B cell (primary cell): ENCODE measurements at regions of chr17 and their contacts with region 1.

Region 1: GRCh38 chr17:21043286-21044232 is 748 bp upstream of the USP22 start:
- DNase-seq: peak; percentile 98
- ATAC-seq: peak; percentile 75
- H3K4me3 ChIP-seq: peak overlapping the region; percentile 63 to 68 (median 65)
- H3K4me3 Mint-ChIP-seq: peak overlapping the region; percentile 81
- H3K27ac ChIP-seq: peak overlapping the region; percentile 95
- H3K27ac Mint-ChIP-seq: peak overlapping the region; percentile 90
- H3K4me1 ChIP-seq: peaks cover 24 to 37% of the 10 kb centered on the region in 2 donors
- H3K4me1 Mint-ChIP-seq: peaks cover 32% of the 10 kb centered on the region
- H3K27me3 ChIP-seq: no peaks in the 10 kb centered on the region
- H3K27me3 Mint-ChIP-seq: no peaks in the 10 kb centered on the region
- CTCF ChIP-seq: peak; percentile 92

Region 2: DNA sequence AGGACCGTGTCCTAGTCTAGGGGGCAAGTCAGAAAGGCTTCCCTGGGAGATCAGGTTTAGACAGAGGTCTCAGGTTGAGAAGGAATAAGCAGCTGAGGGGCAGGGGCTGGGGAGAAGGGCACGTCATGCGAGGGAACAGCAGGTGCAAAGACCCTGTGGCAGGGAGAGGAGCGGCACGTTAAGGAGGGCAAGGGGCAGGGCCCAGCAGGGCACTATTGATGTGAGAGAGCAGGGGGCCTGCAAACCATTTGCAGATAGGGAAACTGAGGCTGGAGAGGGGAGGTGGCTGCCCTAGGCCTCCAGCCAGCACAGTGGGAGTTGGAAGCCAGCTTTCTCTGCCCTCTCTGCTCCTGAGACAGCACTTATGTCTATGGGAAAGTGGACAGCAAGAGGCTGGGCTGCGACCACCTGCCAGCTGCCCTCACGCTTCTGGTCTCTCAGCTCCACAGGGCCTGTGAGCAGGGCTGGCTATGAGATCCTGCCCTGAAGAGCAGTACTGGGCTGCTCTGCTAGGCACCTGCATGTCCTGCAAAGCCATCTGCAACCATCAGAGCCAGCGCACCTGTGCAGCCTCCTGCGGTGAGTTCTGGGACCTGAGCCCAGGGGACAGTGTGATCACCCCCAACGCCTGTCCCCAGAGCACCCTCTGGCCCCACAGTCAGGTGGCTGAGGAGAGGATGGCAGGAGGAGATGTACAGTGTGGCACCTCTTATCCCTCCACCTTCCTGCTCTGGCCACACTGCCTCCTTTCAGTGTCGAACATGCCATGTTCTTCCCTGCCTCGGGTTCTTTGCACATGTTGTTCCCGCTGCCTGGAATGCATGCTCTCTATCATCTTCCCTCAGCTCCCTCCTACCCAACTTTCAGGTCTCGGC is 62.3 kb before region 1 on chr17:
- CTCF ChIA-PET with region 1: no interaction called
- POLR2A ChIA-PET with region 1: no interaction called
- intact Hi-C with region 1: no loop called
- DNase-seq: no peak
- ATAC-seq: no peak
- H3K4me3 ChIP-seq: no peak overlapping the region
- H3K4me3 Mint-ChIP-seq: no peak overlapping the region
- H3K27ac ChIP-seq: no peak overlapping the region
- H3K27ac Mint-ChIP-seq: no peak overlapping the region
- H3K4me1 ChIP-seq: peaks cover 0 to 4% of the 10 kb centered on the region in 2 donors
- H3K4me1 Mint-ChIP-seq: peaks cover 12% of the 10 kb centered on the region
- H3K27me3 ChIP-seq: no peaks in the 10 kb centered on the region
- H3K27me3 Mint-ChIP-seq: no peaks in the 10 kb centered on the region
- CTCF ChIP-seq: no peak

Region 3: DNA sequence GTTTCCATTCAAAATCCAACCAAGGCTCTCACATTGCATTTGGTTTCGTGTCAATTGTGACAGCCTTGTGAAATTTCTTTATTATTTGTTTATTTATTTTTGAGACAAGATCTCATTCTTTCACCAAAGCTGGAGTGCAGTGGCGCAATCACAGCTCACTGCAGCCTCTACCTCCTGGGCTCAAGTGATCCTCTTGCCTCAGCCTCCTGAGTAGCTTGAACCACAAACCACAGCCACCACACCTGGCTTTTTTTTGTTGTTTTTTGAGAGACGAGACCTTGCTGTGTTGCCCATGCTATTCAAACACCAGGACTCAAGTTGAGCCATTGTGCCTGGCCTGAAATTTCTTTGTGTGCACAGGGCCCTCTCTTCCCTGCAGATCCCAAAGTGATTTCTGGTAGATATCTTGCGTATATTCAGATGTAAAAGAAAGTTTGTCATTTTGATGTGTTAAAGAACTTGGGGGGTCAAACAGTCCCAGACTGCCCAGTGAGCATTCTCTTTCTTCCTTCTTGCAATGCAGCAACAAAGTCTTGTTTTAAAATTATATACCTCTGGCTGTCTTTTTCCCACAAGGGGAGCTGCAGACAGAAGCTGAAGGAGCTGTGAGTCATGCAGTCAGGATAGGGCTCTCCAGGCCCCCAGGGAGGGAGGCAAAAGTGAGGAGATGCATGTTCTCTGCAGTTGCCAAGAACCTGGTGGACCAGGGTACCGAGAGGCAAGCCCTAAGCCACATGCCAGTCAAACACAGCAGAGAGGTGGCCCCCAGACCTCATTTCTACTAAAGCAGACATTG is 14.7 kb after region 1 on chr17:
- CTCF ChIA-PET with region 1: interaction called, 23 read pairs
- POLR2A ChIA-PET with region 1: interaction called, 31 read pairs
- intact Hi-C with region 1: no loop called
- DNase-seq: no peak
- ATAC-seq: no peak
- H3K4me3 ChIP-seq: no peak overlapping the region
- H3K4me3 Mint-ChIP-seq: no peak overlapping the region
- H3K27ac ChIP-seq: no peak overlapping the region
- H3K27ac Mint-ChIP-seq: no peak overlapping the region
- H3K4me1 ChIP-seq: peaks cover 14 to 23% of the 10 kb centered on the region in 2 donors
- H3K4me1 Mint-ChIP-seq: peaks cover 24% of the 10 kb centered on the region
- H3K27me3 ChIP-seq: no peaks in the 10 kb centered on the region
- H3K27me3 Mint-ChIP-seq: no peaks in the 10 kb centered on the region
- CTCF ChIP-seq: no peak

Region 4: GRCh38 chr17:21214015-21214776 is 170.6 kb after region 1 on chr17 and contains the start of gene TMEM11:
- CTCF ChIA-PET with region 1: no interaction called
- POLR2A ChIA-PET with region 1: interaction called, 5 read pairs
- intact Hi-C with region 1: loop called (anchors 1 kb)
- DNase-seq: peak; percentile 96
- ATAC-seq: peak; percentile 91
- H3K4me3 ChIP-seq: peak within 1 kb of the TSS; percentile 68 to 99 (median 89)
- H3K4me3 Mint-ChIP-seq: peak within 1 kb of the TSS; percentile 93
- H3K27ac ChIP-seq: peak within 1 kb of the TSS; percentile 85 to 91
- H3K27ac Mint-ChIP-seq: peak within 1 kb of the TSS; percentile 92
- H3K4me1 ChIP-seq: peaks cover 31 to 37% of the 10 kb centered on the region in 2 donors
- H3K4me1 Mint-ChIP-seq: peaks cover 49% of the 10 kb centered on the region
- H3K27me3 ChIP-seq: no peaks in the 10 kb centered on the region
- H3K27me3 Mint-ChIP-seq: no peaks in the 10 kb centered on the region
- CTCF ChIP-seq: no peak
- total RNA-seq, gene TMEM11: 24.7 and 25.3 TPM in 2 replicates

Region 5: DNA sequence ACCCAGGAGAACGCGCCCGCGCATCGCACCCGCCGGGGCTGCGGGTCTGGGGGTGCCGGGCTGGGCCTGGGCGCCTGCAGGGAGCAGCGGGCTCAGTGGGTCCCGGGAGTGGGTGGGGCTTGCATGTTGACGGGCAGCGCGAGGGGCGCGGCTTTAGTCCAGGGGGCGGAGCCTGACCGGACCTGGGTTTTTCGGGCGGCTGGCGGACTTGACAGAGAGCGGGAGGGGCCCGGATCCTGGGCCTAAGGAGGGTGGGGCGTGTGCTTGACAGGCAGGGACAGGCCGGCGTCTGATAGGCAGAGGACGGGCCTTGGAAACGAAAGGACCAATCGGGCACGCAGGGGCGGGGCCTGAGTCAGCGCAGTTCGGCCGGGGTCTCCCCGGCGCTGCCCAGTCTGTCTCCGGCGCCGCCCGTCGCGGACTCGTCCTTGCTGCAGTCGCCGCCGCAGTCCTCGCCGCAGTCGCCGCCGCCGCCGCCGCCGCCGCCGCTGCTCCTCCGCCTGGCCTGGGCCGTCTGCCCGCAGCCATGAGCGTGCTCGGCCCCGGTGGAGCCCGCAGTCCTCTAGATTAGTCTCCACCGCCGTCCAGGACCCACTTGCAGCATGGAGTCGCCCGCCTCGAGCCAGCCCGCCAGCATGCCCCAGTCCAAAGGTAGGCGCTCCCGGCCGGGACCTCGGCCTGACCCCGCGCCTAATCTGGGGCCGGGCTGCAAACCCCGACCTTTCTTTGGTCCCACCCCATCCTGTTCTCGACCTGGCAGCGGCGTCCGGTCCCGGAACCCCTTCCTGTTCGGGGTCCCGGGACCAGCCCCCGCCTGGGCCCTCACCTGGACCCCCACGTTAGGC is 241.0 kb after region 1 on chr17 and contains the start of gene MAP2K3:
- CTCF ChIA-PET with region 1: interaction called, 15 read pairs
- POLR2A ChIA-PET with region 1: interaction called, 13 read pairs
- intact Hi-C with region 1: loop called (anchors 1 kb)
- DNase-seq: peak; percentile 98
- ATAC-seq: peak; percentile 66
- H3K4me3 ChIP-seq: peak within 1 kb of the TSS; percentile 81 to 98 (median 93)
- H3K4me3 Mint-ChIP-seq: peak within 1 kb of the TSS; percentile 96
- H3K27ac ChIP-seq: peak within 1 kb of the TSS; percentile 95
- H3K27ac Mint-ChIP-seq: peak within 1 kb of the TSS; percentile 99
- H3K4me1 ChIP-seq: peaks cover 58 to 78% of the 10 kb centered on the region in 2 donors
- H3K4me1 Mint-ChIP-seq: peaks cover 78% of the 10 kb centered on the region
- H3K27me3 ChIP-seq: no peaks in the 10 kb centered on the region
- H3K27me3 Mint-ChIP-seq: no peaks in the 10 kb centered on the region
- CTCF ChIP-seq: no peak
- total RNA-seq, gene MAP2K3: 114 and 118 TPM in 2 replicates